Mammary epithelial cell (primary cell): ENCODE measurements at regions of chr11 and their contacts with region 1.

Region 1: DNA sequence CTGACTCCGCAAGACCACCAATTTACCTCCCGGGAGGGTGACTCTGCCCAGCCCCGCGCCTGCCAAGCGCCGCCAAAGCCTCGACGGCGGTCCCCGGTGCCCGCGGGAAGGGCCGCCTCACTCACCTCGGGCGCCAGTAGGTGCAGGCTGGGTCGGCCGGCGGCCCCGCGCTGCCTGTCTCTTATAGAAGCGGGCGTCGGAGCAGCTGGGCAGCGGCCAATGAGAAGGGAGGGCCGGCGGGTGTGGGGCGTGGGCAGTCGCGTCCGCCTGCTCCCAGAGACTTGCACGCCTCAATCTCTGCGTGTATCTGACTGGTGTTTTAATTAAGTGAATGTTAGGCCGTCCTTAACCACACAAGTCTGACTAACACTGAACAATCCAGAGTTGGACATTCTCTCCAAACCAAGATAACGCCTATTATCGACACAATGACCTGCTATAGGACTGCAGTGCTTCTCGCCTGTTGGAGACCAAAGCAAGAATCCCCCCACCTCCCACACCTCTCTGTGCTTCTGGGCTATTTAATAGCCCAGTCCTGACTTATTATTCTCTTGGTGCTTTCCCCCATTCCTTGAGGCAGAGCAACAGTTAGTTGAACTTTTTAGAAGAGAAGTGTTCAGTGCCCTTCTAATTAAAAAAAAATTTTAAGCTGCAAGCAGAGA is at the start of gene TPH1:
- DNase-seq: peak; percentile 76
- H3K4me3 ChIP-seq: peak within 1 kb of the TSS in 2 of 3 experiments; percentile 14 to 32
- H3K27ac ChIP-seq: no peak within 1 kb of the TSS
- H3K4me1 ChIP-seq: peaks cover 9% of the 10 kb centered on the region
- H3K27me3 ChIP-seq: peaks cover 2% of the 10 kb centered on the region
- CTCF ChIP-seq: no peak
- total RNA-seq, gene TPH1: 0.17 to 0.24 TPM

Region 2: GRCh38 chr11:17932472-17932871 is 113.8 kb before region 1 on chr11:
- CTCF ChIA-PET with region 1: no interaction called
- dilution Hi-C with region 1: no loop called
- in situ Hi-C with region 1: no loop called
- intact Hi-C with region 1: no loop called
- DNase-seq: no peak
- H3K4me3 ChIP-seq: no peak overlapping the region
- H3K27ac ChIP-seq: no peak overlapping the region
- H3K4me1 ChIP-seq: no peaks in the 10 kb centered on the region
- H3K27me3 ChIP-seq: no peaks in the 10 kb centered on the region
- CTCF ChIP-seq: peak in 1 of 2 donors; percentile 28

Region 3: GRCh38 chr11:17986007-17986710 is 60.1 kb before region 1 on chr11:
- CTCF ChIA-PET with region 1: no interaction called
- dilution Hi-C with region 1: loop called (anchors 5 kb)
- in situ Hi-C with region 1: no loop called
- intact Hi-C with region 1: no loop called
- DNase-seq: peak; percentile 82
- H3K4me3 ChIP-seq: no peak overlapping the region
- H3K27ac ChIP-seq: peak overlapping the region; percentile 53
- H3K4me1 ChIP-seq: peaks cover 23% of the 10 kb centered on the region
- H3K27me3 ChIP-seq: no peaks in the 10 kb centered on the region
- CTCF ChIP-seq: no peak

Region 4: DNA sequence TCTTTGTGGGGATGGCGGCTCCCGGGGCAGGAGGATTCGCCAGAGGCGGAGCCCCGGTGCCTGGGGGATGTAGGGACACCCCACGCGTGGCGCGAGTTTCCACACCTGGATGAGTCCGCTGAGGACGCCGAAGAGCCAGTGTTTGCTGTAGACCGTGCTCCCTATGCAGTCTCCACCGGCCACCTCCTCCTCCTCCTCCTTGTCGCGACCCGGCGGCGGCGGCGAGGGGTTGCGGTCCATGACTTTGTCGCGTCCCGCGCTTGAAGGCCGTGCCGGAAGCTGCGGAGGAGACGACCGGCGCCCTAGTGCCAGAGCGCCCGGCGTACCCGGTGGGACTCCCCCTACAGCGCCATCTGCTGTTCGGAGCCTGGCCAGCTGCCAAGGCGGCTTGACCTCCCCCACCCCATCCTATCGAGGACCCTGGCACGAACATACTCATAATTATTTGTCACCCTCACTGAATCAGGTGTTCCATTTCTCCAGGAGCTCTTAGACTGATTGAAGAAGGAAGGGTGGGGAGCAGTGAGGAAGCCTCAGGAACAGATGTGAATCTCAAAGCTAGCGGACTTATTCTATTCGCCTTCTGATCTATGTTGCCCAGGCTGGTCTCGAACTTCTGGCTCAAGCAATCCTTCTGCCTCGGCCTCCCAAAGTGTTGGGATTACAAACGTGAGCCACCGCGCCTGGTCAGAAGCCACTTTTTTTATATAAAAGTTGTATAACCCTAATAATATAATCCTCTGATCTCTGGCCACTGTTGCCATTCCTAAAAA is 59.7 kb after region 1 on chr11 and contains the start of gene SAAL1:
- CTCF ChIA-PET with region 1: no interaction called
- dilution Hi-C with region 1: no loop called
- in situ Hi-C with region 1: no loop called
- intact Hi-C with region 1: no loop called
- DNase-seq: peak; percentile 65
- H3K4me3 ChIP-seq: peak within 1 kb of the TSS; percentile 84 to 98 (median 93)
- H3K27ac ChIP-seq: peak within 1 kb of the TSS; percentile 56
- H3K4me1 ChIP-seq: peaks cover 18% of the 10 kb centered on the region
- H3K27me3 ChIP-seq: no peaks in the 10 kb centered on the region
- CTCF ChIP-seq: peak; percentile 57 to 81
- total RNA-seq, gene SAAL1: 12.2 to 24.6 TPM